Cardiac septum (tissue), 1 donor: ENCODE measurements at regions of chr13 and their contacts with region 1.

Region 1: GRCh38 chr13:110561344-110562035 is at the start of gene RAB20:
- DNase-seq: peak; percentile 95
- total RNA-seq, gene RAB20: 12.6 TPM

Region 2: DNA sequence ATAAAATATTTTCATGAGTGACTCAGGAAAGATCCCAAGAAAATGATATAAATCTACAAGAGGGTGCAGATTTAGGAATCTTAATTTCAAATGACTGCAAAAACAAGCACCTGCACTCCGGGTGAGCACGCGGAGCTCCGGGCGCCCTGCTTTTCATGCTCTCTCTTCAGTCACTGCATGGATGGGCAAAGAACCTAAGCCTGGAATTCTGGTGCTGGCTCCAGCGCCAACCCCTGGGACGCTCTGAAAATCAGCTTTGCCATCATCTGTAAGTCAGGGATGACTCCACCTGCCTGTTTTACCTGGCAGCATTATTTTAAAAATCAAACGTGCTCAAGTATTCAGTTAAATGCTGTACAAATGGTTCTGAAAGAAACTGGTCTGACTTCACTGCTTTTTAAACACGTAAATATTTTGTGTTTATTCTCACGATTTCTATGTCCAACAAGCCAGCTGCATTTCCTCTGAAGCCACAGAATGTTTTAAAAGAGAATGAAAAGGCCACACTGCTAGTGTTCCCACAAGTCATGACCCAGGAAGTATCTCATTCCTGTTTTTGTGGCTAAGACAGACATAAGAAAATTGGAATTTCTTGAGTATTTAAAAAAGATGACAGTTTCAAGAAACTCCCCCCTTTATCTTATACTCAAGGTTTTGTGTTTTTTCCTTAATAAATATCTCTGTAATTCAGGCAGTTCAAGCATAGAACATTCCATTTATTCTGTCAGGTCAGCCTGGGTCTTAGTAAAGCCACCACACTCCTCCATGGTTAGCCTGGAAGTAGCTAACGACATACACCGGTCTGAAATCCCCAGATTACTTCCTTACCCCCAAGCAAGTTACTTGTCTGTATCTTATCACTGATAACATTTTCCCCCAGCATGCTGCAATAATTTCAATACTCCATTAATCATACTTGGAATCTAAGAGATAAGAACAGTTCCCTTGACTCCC is 335.6 kb before region 1 on chr13:
- intact Hi-C with region 1: loop called (anchors 10 kb)
- DNase-seq: no peak

Region 3: GRCh38 chr13:110412132-110412914 is 149.2 kb before region 1 on chr13:
- intact Hi-C with region 1: no loop called
- DNase-seq: peak; percentile 91

Region 4: DNA sequence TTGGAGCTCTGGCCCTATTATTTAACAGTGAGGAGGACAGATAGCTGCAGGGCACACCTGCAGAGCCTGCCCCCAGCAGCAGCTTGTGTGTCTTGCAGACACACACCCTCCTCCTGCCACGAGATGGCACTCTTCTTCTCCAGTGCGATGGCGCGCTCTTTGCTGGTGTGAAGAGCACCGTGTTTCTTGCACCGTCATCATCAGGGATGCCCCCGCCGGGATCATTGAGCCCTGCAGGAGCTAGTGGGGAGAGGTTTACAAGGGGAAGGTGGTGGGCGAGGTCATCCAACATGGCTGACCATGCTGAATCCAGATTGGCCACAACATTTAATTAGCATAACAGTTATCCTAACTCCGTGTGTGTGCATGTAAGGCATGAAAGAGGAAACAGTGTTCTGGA is 105.5 kb before region 1 on chr13:
- intact Hi-C with region 1: loop called (anchors 2 kb)
- DNase-seq: peak; percentile 85

Region 5: DNA sequence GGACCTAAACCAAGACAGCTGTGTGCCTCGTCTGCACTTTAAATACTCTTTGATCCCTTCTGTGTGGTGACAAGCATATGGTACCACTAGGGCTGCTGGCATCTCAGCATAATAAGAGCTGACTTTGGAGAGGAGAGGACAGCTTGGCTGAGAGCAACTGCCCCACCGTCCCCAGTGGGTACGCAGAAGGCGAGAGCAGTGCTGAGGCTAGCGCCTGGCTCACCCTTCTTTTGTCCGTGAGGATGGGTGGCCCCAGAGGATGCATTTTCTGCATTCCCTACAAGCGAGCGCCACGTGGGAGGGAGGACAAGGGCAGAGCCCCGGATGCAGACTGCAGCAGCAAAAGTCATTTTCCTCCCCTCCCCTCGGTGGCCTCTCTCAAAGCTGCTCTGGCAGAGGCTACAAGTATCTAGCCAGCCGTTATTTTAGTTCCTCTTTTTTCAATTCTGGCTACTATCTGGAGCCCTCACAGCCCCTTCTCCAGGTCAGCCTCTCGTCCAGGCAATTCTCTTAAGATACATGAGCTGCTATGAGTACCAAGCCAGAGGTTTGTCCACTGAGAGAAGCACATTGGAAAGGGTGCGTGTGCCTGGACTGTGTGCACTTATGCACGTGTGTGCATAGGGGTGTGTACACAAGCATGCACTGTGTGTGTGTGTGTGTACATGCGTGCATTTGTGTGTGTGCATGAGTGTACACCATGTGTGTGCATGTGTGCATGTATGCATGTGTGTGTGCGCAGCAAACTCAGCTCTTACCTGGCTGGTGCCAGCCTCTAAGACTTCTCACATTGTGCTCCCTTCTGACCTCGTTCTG is 51.3 kb before region 1 on chr13:
- intact Hi-C with region 1: loop called (anchors 2 kb)
- DNase-seq: no peak

Region 6: DNA sequence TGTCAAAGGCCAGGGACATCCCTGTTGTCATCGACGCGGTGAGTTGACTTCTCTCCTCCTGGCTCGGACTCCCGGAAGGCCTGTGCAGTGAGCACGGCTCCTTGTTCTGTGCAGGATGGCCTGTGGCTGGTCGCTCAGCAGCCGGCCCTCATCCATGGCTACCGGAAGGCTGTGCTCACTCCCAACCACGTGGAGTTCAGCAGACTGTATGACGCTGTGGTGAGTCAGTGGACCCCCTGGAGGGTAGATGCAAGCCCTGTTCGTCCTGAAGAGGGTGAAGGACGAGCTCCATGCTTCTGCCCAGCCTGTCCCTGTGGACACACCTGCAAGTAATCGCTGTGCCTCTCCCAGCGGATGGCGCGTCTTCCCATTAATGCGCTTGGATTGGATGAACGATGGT is 73.1 kb after region 1 on chr13:
- intact Hi-C with region 1: no loop called
- DNase-seq: no peak